Left cardiac atrium (tissue), 4 donors: ENCODE measurements at regions of chr20 and their contacts with region 1.

Region 1: GRCh38 chr20:5788385-5788895 is 38.2 kb downstream of the SHLD1 start:
- DNase-seq: peak; percentile 80
- ATAC-seq: peak; percentile 92 to 94

Region 2: GRCh38 chr20:5529331-5530148 is 258.9 kb before region 1 on chr20:
- intact Hi-C with region 1: loop called in 1 of 2 experiments (anchors 5 kb)
- DNase-seq: peak; percentile 83
- ATAC-seq: peak; percentile 83 to 90

Region 3: DNA sequence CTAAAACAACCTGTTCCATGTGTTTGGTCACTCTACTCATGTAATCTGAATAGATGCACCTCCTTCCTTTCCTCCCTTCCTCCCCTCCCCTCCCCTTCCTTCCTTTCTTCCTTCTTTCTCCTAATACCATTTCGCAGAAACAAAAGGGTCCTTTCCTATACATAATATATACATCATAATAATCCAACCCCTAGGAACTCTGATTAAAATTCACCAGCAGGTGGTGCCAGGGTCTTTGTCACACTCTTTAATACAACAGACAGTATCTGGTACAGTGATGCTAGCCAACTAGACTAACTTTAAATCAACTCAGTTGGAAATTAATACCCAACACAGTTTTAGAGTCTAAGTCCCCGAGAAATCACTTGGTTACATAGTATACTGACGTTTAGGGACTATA is 219.4 kb before region 1 on chr20:
- intact Hi-C with region 1: loop called (anchors 5 to 10 kb)
- DNase-seq: no peak
- ATAC-seq: peak; percentile 56 to 67

Region 4: DNA sequence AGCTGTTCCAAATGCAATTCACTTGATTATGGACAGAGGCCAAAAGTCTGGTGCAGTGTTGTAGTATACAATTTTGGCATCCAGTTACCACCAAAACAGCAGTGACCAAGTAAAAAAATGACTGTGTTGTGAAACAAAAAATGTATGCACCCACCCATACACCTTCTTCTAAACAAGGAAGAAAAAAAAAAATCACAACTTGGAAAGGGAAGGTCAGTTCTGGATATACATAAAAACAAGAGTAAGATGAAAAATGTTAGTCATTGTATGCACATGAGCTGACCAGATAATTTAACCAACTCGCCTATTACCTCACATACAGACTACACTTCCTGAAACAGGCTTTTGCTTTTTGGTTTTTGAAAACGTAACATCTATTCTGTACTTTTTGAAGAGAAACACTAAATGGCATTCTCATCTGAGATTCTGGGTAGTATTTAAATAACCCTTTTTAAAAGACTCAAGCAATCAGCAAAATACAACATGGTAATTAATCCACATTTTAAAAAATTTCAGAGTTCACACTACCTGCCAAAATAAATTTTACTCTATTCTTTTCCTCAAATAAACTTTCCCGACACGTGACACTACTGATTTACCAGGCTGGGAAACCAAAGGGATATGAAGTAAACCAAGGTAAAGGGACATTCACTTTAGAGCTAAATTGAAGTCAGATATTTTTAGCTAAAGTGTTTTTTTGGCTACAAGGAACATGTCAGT is 179.8 kb before region 1 on chr20:
- intact Hi-C with region 1: loop called in 1 of 2 experiments (anchors 5 kb)
- DNase-seq: no peak
- ATAC-seq: no peak

Region 5: DNA sequence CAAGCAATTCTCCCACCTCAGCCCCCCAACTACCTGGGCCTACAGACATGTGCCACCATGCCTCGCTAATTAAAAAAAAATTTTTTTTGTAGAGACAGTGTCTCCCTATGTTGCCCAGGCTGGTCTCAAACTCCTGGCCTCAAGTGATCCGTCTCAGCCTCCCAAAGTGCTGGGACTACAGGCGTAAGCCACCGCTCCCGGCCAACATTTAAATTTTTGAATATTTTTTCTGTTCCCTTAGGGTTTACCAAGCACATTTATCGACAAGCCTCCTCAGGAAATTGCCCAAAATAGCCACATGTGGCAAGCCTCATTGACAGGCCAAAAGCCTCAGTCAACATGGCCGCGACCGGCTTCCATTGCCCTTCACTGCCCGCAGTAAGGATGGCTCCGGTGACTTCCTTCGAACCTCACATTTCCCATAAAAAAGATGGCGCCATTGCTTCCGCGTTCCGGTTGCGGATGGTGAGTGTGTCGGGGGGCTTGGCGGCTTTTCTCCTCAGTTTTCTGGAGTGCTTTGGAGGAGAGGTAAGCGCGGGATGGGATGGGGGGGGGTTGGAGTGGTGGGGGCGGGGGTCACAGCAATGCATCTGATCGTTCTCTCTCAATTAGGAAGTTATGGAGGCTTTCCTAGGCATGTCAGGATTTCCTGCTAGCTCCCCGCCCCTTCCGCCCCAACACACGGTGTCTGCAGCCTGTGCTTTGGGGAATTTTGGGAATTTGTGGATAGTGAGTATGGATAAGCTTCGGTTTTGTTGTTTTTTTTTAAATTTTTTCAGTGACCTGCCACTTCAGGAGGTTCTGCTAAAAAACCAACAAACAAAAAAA is 38.3 kb before region 1 on chr20 and contains the start of gene SHLD1:
- intact Hi-C with region 1: loop called in 1 of 2 experiments (anchors 5 kb)
- DNase-seq: peak; percentile 89
- ATAC-seq: peak; percentile 96 to 97
- total RNA-seq, gene SHLD1: 8.9 to 9.3 TPM

Region 6: DNA sequence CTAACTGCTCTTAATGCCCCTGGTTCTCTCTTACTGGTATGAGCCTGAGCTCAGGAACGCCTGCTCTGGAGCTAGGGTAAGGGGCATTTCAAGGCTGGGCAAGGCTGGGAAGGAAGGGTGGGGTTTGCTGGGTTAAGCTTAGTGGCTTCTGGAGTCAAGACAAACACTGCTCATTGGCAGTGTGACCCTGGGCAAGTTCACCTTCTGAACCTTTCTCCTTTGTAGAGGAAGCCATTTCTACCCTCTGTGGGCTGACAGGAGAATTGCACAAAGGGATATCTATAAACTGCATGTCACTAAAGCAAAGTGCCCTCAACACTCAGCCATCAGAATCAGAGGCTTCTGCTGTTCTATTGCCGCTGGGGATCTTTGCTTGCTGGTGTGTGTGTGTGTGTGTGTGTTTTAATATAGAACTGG is 285.7 kb after region 1 on chr20:
- intact Hi-C with region 1: loop called in 1 of 2 experiments (anchors 10 kb)
- DNase-seq: no peak
- ATAC-seq: peak; percentile 57 to 82